ENCODE measurements at regions of chr12 and their contacts with region 1.

Region 1: GRCh38 chr12:50074936-50075807 is 10.0 kb upstream of the SMARCD1 start:
- DNase-seq: peak; percentile 89
- CTCF ChIP-seq: peak; percentile 94

Region 2: GRCh38 chr12:49959570-49960465 is 115.4 kb before region 1 on chr12:
- CTCF ChIA-PET with region 1: interaction called, 243 read pairs
- POLR2A ChIA-PET with region 1: no interaction called
- DNase-seq: no peak
- CTCF ChIP-seq: no peak

Region 3: GRCh38 chr12:50043854-50044253 is 31.3 kb before region 1 on chr12:
- CTCF ChIA-PET with region 1: interaction called, 122 read pairs
- POLR2A ChIA-PET with region 1: no interaction called
- DNase-seq: no peak
- CTCF ChIP-seq: no peak

Region 4: DNA sequence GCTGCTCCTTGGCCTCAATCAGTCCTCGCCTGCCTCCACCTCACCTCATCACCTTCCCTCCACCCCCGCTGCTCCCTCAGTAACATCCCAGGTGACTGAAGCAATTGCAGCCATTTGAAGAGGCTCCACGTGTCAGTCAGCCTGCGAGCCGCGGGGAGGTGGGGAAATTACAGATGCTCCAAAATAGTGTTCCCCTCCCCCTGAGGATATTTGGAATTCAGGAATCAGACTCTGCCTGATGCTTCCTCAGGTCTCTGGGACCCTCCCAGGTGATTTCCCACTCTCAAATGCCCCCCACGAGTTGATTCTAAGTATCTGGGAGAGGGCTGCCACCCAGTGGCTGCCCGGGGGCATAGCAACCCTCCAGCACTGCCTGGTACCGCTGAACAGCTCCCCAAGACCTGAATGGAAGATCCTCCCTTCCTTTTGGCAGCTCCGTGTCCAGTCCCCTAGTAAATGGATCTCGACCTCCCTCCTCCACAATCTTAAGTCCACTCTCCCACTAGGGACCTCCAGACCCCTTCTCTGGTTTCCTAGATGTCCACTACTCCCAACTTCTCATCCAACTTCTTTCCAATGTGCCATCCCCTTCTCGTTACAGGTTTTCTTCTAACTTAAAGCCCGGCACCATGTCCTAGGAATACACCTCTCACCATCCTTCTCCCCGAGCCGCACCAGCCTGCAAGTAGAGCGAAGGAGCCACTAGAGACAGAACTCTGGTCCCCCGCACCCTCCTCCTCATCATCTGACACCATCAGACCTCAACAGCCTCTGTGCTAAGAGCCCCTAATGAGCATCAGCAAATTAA is 19.1 kb before region 1 on chr12:
- CTCF ChIA-PET with region 1: interaction called, 92 read pairs
- POLR2A ChIA-PET with region 1: no interaction called
- DNase-seq: peak; percentile 83
- CTCF ChIP-seq: peak; percentile 95

Region 5: DNA sequence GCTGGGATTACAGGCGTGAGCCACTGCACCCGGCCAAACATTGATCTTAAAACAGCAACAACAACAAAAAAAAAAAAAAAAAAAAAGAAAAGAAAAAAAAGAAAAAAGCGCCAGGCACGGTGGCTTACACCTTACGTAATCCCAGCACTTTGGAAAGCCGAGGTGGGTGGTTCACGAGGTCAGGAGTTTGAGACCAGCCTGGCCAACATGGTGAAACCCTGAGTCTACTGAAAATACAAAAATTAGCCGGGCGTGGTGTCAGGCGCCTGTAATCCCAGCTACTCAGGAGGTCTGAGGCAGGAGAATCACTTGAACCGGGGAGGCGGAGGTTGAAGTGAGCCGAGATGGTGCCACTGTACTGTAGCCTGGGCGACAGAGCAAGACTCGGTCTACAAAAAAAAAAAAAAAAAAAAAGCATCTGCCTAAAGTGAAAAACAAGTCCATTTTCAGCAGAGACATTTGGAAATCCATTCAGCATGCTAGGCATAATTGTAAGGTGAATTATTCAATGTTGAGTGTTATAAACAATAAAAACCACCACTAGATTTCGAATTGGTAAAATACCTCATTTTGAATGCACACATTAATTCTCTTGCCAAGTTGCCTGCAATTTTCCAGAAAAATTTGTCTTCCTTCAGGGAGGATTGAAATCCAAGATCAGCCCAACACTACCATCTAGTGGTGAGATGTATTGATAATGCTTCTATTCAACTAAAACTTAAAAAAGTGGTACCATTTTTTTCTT is 100.0 kb after region 1 on chr12:
- CTCF ChIA-PET with region 1: interaction called, 39 read pairs
- POLR2A ChIA-PET with region 1: interaction called, 8 read pairs
- DNase-seq: peak; percentile 39
- CTCF ChIP-seq: peak; percentile 38